ENCODE measurements at regions of chr3 and their contacts with region 1.

Region 1: GRCh38 chr3:106025151-106025722 is 156.4 kb upstream of the CBLB start:
- DNase-seq: no peak
- ATAC-seq: no peak
- H3K4me3 ChIP-seq: no peak overlapping the region
- H3K4me3 Mint-ChIP-seq: no peak overlapping the region
- H3K27ac ChIP-seq: no peak overlapping the region
- H3K27ac Mint-ChIP-seq: no peak overlapping the region
- H3K4me1 ChIP-seq: no peaks in the 10 kb centered on the region
- H3K4me1 Mint-ChIP-seq: peaks cover 3% of the 10 kb centered on the region
- H3K27me3 ChIP-seq: no peaks in the 10 kb centered on the region
- H3K27me3 Mint-ChIP-seq: no peaks in the 10 kb centered on the region
- CTCF ChIP-seq: no peak

Region 2: GRCh38 chr3:105130911-105131310 is 894.3 kb before region 1 on chr3:
- CTCF ChIA-PET with region 1: no interaction called
- POLR2A ChIA-PET with region 1: no interaction called
- intact Hi-C with region 1: no loop called
- DNase-seq: no peak
- ATAC-seq: no peak
- H3K4me3 ChIP-seq: no peak overlapping the region
- H3K4me3 Mint-ChIP-seq: no peak overlapping the region
- H3K27ac ChIP-seq: no peak overlapping the region
- H3K27ac Mint-ChIP-seq: no peak overlapping the region
- H3K4me1 ChIP-seq: no peaks in the 10 kb centered on the region
- H3K4me1 Mint-ChIP-seq: no peaks in the 10 kb centered on the region
- H3K27me3 ChIP-seq: no peaks in the 10 kb centered on the region
- H3K27me3 Mint-ChIP-seq: no peaks in the 10 kb centered on the region
- CTCF ChIP-seq: no peak

Region 3: GRCh38 chr3:105984837-105985236 is 40.4 kb before region 1 on chr3:
- CTCF ChIA-PET with region 1: no interaction called
- POLR2A ChIA-PET with region 1: no interaction called
- intact Hi-C with region 1: no loop called
- DNase-seq: peak in 2 of 9 experiments; percentile 56 to 63
- ATAC-seq: no peak
- H3K4me3 ChIP-seq: no peak overlapping the region
- H3K4me3 Mint-ChIP-seq: no peak overlapping the region
- H3K27ac ChIP-seq: no peak overlapping the region
- H3K27ac Mint-ChIP-seq: no peak overlapping the region
- H3K4me1 ChIP-seq: peaks cover 7% of the 10 kb centered on the region
- H3K4me1 Mint-ChIP-seq: peaks cover 34% of the 10 kb centered on the region
- H3K27me3 ChIP-seq: no peaks in the 10 kb centered on the region
- H3K27me3 Mint-ChIP-seq: no peaks in the 10 kb centered on the region
- CTCF ChIP-seq: no peak

Region 4: DNA sequence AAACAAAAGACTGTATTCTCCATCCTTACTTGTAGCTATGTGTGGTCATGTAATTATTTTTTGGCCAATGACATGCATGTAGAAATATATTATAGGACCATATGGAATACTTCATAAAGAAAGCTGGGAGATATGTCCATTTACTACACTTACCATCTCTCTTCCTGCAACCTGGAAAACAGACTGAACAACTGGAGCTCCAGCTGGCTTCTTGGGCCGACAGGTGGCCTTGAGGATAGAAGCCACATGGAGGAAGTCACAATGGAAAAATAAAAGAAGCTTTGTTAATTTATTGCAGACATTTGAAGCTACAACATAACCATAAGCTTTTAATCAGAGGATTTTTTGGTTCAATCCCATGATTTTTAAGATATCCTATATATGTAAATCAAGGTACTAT is 11.5 kb after region 1 on chr3:
- CTCF ChIA-PET with region 1: no interaction called
- POLR2A ChIA-PET with region 1: no interaction called
- intact Hi-C with region 1: loop called in 1 of 2 experiments (anchors 1 kb)
- DNase-seq: no peak
- ATAC-seq: no peak
- H3K4me3 ChIP-seq: no peak overlapping the region
- H3K4me3 Mint-ChIP-seq: no peak overlapping the region
- H3K27ac ChIP-seq: no peak overlapping the region
- H3K27ac Mint-ChIP-seq: no peak overlapping the region
- H3K4me1 ChIP-seq: no peaks in the 10 kb centered on the region
- H3K4me1 Mint-ChIP-seq: peaks cover 2% of the 10 kb centered on the region
- H3K27me3 ChIP-seq: no peaks in the 10 kb centered on the region
- H3K27me3 Mint-ChIP-seq: no peaks in the 10 kb centered on the region
- CTCF ChIP-seq: no peak